SK-N-SH (cell line): ENCODE measurements at regions of chr14 and their contacts with region 1.

Region 1: DNA sequence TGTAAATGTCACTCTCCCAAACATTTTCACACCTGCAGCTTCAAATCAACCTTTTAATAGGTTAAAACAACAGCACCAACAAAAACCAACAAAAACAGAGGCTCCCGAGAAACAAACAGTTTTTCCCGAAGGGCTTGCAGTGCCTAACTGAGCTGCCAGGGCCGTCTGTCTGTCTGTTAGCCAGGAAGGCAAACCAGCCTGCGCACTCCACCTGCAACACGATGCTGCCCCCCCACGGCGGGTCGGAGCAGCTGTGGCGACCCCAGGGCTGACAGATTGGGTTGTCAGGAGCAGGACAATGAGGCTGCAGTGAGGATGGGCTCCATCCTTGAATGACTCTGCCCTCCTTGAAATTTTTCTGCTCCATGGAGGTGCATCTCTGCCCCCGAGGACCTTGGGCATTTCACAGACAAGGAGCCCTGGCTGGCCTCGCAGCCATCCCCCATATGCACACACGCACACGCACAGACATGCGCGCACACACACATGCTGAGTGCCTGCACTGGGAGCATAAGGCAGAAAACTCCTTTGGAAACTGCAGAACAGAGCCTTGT is 2.6 kb downstream of the RTL1 start:
- DNase-seq: peak; percentile 81
- H3K4me3 ChIP-seq: peak overlapping the region in 1 of 2 experiments; percentile 48; a peak in 2 of 4 replicates
- H3K27ac ChIP-seq: peak overlapping the region in 1 of 2 experiments; percentile 99; a peak in 2 of 4 replicates
- H3K4me1 ChIP-seq: peaks cover 0 to 79% of the 10 kb centered on the region in 2 experiments; a peak in 3 of 4 replicates
- H3K27me3 ChIP-seq: peaks cover 6% of the 10 kb centered on the region; the same call in 1 of the 2 replicates
- CTCF ChIP-seq: peak; percentile 46
- EP300 ChIP-seq: no peak
- RAD21 ChIP-seq: peak; percentile 88

Region 2: DNA sequence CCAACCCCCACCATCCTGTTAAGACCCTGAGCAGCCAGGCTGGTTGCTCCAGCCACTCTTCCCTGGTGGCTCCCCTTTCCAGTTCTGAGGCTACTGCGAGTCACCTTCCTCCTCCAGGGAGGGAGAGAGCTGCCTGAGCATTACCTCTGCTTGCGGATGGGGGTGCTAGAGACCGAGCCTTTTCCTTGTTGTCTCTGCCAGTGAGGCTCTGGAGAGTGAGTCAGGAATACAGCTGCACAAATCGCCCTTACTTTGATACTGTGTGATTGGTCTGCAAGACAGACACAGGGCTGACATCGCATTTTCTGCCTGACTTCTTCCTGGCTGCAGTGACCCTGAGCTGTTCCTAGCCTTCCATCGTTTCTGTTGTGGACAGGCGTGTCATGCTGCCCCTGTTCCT is 483.4 kb before region 1 on chr14:
- CTCF ChIA-PET with region 1: interaction called, 11 read pairs
- POLR2A ChIA-PET with region 1: interaction called, 14 read pairs
- DNase-seq: peak; percentile 85
- H3K4me3 ChIP-seq: no peak overlapping the region; a peak in 1 of 4 replicates
- H3K27ac ChIP-seq: peak overlapping the region; percentile 52 to 84
- H3K4me1 ChIP-seq: peaks cover 9 to 53% of the 10 kb centered on the region in 2 experiments
- H3K27me3 ChIP-seq: no peaks in the 10 kb centered on the region
- CTCF ChIP-seq: peak; percentile 88
- EP300 ChIP-seq: peak in 1 of 2 experiments; percentile 49; a peak in 1 of 4 replicates
- RAD21 ChIP-seq: peak; percentile 98

Region 3: DNA sequence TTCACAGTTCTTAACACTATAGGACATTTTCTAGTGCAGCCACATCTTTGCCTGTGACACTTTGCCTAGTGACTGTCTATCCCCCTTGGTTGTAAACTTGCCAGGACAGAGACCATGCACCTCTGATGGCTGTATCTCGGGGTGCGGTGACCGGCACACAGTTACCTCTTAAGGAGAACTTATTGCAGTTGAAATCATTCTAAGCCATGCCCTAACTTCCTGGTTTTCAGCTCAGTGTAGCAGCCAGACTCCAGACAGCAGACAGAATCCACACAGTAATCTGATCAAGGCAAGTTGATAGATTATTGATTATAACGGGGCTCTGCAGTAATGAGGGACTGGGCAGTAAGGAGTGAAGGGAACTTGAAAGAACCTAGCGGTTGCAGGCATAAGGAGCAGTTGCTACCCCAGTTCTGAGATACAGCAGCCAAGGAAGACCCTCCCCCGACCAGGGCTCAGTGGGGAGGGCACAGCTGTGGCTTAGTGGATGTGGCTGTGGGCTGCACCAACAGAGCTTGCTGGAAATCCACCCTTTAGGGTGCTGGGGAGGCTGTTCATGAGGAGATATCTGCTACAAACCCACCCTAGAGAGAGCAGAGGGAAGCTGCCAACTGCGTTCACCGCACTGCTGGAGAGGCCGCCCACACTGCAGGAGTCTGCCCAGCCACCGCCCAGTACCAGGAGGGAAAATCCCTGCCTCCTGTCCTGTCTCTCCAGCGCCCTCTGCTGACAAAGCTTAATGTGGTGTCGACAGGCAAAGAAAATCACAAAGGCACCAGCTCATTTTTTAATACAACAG is 255.5 kb before region 1 on chr14:
- CTCF ChIA-PET with region 1: interaction called, 15 read pairs
- POLR2A ChIA-PET with region 1: no interaction called
- DNase-seq: peak; percentile 84
- H3K4me3 ChIP-seq: peak overlapping the region in 1 of 2 experiments; percentile 39; a peak in 1 of 4 replicates
- H3K27ac ChIP-seq: peak overlapping the region in 1 of 2 experiments; percentile 76; a peak in 2 of 4 replicates
- H3K4me1 ChIP-seq: peaks cover 5 to 34% of the 10 kb centered on the region in 2 experiments; a peak in 2 of 4 replicates
- H3K27me3 ChIP-seq: no peaks in the 10 kb centered on the region
- CTCF ChIP-seq: peak; percentile 53
- EP300 ChIP-seq: no peak
- RAD21 ChIP-seq: peak; percentile 86

Region 4: DNA sequence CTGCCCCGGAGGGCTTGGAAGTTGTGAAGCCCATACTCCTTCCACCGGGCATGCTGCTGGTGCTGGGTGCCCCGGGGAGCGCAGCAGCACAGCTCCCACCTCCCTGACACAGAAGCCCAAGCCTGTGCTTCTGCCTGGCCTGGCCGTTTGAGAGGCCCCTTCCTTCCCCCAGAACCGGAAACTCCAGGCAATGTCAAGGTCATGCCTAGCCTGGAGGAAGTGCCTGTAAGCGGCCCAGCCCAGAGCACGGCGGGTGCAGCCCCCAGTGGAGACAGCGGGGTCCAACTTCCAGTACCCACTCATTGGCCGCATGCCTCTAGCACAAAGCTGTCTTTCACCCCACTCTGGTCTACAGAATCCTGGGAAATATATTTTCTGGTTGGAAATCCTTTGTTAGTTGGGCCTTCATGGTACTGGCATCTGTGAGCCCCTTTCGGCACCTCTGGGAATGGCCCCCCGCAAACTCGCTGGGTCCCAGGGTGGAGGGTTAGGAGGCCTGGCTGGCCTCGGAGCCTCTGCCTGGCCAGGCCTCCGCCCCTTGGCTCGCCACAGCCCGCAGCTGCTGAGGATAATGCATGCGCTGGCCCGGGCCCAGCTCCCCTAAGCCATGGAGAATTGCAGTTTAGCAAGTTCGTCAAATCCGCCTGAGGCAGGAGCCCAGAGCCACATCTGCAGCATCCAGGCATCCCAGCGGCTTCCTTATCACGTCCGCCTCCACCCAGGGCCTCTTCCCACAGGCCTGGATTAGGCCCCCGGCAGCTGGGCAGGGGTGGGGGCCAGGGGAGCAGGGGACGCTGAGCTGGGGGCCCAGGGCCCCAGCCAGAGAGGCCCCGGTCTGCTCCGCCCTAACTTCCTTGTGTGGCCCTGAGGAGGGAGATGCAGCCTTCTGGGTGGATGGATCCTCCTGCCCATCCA is 223.1 kb before region 1 on chr14:
- CTCF ChIA-PET with region 1: interaction called, 10 read pairs
- POLR2A ChIA-PET with region 1: interaction called, 57 read pairs
- DNase-seq: peak; percentile 89
- H3K4me3 ChIP-seq: no peak overlapping the region
- H3K27ac ChIP-seq: peak overlapping the region in 1 of 2 experiments; percentile 99; a peak in 3 of 4 replicates
- H3K4me1 ChIP-seq: peaks cover 0 to 97% of the 10 kb centered on the region in 2 experiments; a peak in 2 of 4 replicates
- H3K27me3 ChIP-seq: no peaks in the 10 kb centered on the region
- CTCF ChIP-seq: no peak
- EP300 ChIP-seq: peak in 1 of 2 experiments; percentile 77; a peak in 2 of 4 replicates
- RAD21 ChIP-seq: peak; percentile 2; the same call in 1 of the 2 replicates

Region 5: DNA sequence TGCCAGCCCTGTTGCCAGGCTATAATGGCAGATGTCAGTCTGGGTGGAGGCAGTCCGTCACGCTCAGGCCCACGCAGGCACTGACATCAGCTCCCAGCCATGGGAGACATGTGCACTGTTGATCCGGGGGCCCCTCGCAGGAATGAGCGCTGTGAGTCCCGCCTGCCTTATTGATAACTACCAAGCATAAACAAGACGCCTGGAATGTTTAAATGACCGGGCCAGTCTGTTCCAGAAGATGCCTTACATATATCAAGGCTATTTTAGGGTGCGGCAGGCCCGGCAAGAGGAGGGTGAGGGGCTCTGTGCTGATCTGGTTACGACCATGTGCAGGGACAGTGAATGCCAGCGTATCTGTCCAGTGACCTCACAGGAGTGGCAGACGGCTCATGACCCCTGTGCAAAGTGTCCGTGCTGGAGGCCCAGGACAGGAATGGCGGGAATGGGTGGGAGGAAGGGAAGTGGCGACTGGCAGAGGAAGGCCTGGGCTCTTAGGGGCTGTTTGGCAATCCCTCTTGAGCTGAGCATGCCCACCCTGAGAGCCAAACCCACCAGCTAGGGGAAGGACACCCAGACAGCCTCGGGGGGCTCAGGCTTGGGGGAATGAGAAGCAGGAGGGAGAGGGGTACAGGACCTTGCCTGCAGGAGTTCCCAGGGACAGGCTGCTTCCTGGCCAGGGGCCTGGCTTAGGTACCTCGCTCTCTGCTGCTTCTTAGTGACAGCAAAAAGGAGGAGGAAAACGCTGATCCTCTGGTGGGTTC is 124.9 kb before region 1 on chr14:
- CTCF ChIA-PET with region 1: interaction called, 13 read pairs
- POLR2A ChIA-PET with region 1: interaction called, 18 read pairs
- DNase-seq: no peak
- H3K4me3 ChIP-seq: no peak overlapping the region
- H3K27ac ChIP-seq: peak overlapping the region in 1 of 2 experiments; percentile 100; a peak in 2 of 4 replicates
- H3K4me1 ChIP-seq: peaks cover 0 to 91% of the 10 kb centered on the region in 2 experiments; a peak in 2 of 4 replicates
- H3K27me3 ChIP-seq: no peaks in the 10 kb centered on the region
- CTCF ChIP-seq: no peak
- EP300 ChIP-seq: no peak
- RAD21 ChIP-seq: no peak

Region 6: DNA sequence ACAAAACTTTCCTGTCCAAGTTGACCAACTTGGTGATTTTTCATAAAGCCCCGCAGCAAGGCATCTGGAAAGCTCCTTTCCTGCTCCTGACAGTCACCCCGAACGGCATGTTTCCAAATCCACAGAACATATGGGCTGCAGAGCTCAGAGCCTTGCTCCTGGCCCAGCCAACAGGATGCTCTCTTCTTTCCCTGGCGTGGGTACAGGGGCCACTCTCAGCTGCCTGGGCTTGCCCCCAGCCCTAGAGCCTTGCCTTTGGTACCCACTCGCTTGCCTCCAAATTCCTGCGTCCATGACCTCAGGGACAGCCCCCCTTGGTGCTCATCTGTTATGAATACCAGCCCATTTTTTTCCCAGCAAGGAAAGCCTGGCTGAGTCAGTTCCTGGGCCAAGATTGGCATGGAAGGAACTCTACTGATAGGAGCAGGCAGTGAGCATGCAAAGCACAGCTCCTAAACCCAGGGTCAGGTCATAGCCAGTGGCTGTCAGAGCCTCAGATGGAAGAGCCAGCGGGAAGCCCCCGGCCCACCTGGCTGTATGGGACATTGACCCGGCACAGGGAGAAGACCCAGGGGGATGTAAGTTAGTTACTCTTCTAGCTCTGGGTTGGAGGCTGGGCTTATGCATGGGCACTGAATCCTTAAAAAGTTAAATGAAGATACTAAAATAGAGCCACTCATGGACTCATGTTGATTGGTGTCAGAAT is 107.9 kb after region 1 on chr14:
- CTCF ChIA-PET with region 1: interaction called, 15 read pairs
- POLR2A ChIA-PET with region 1: interaction called, 20 read pairs
- DNase-seq: no peak
- H3K4me3 ChIP-seq: no peak overlapping the region
- H3K27ac ChIP-seq: peak overlapping the region in 1 of 2 experiments; percentile 100; a peak in 2 of 4 replicates
- H3K4me1 ChIP-seq: peaks cover 0 to 51% of the 10 kb centered on the region in 2 experiments; a peak in 2 of 4 replicates
- H3K27me3 ChIP-seq: no peaks in the 10 kb centered on the region
- CTCF ChIP-seq: no peak
- EP300 ChIP-seq: peak in 1 of 2 experiments; percentile 4; a peak in 1 of 4 replicates
- RAD21 ChIP-seq: no peak; the same call in 1 of the 2 replicates

Region 7: GRCh38 chr14:101235335-101236103 is 334.6 kb after region 1 on chr14:
- CTCF ChIA-PET with region 1: interaction called, 76 read pairs
- POLR2A ChIA-PET with region 1: interaction called, 46 read pairs
- DNase-seq: peak; percentile 95
- H3K4me3 ChIP-seq: no peak overlapping the region
- H3K27ac ChIP-seq: peak overlapping the region in 1 of 2 experiments; percentile 58; a peak in 1 of 4 replicates
- H3K4me1 ChIP-seq: peaks cover 0 to 37% of the 10 kb centered on the region in 2 experiments; a peak in 1 of 4 replicates
- H3K27me3 ChIP-seq: no peaks in the 10 kb centered on the region
- CTCF ChIP-seq: peak; percentile 70
- EP300 ChIP-seq: no peak
- RAD21 ChIP-seq: peak; percentile 93